ENCODE measurements at regions of chr2 and their contacts with region 1.

Region 1: DNA sequence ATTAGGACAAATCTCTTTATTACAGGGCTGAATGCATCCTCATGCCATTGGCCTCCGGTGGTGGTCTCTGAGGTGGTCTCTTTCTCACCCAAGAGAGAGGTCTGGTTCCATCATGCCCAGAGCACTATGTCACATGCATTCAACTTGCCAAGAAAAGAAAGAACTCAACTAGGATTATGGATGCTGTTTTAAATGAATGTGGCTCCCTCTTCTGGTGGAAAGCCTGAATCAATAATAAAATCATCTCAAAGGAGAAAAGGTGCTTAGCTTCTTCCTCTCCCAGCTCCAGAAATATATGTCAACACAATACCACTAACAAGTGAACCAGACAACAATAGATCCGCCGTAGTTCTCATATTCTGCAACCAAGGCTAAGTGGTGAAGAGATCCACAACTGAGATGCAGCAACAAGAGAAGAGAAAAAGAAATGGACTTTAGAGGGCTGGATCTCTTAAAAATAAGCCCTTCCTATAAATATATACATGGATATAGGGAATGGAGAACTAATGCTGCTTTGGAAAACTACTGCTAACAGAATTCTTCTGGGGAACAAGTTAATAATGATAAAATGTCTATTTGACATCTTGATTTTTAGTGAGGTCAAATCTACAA is 396.8 kb downstream of the NCKAP5 start:
- DNase-seq: peak; percentile 53
- H3K4me3 ChIP-seq: no peak overlapping the region
- H3K27ac ChIP-seq: no peak overlapping the region
- H3K4me1 ChIP-seq: no peaks in the 10 kb centered on the region
- H3K27me3 ChIP-seq: no peaks in the 10 kb centered on the region
- CTCF ChIP-seq: peak; percentile 62 to 65

Region 2: DNA sequence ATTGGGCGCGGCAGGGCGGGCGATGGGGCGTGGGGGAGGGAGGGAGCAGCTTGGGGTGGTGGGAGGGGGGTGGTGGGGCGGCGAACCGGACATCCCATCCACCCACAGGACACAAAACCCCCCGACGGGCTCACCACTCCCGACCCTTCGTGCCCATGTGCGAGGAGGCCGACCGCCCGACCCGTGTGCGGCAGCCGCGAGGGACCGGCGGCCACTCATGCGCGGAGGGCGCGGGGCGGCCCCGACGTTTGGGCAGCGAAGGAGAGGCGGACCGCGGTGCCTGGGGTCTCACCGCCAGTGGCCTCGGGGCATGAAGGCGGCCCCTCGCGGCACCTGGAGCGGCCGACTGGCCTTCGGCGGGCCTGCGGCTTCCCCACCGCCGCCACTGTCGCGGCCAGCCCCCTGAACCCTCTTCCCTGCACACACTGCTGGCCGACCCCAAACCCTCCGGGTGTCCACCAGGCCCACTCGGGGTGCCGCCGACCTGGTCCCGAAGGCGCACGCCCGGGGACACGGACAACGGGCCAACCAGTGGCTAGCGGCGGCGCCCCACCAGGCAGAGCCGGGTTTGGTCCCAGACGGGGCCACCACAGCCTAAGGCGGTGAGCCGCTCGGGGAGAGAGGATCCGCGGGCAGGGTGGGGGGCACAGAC is 915.1 kb before region 1 on chr2:
- CTCF ChIA-PET with region 1: no interaction called
- dilution Hi-C with region 1: no loop called
- in situ Hi-C with region 1: loop called (anchors 10 to 25 kb)
- intact Hi-C with region 1: no loop called
- DNase-seq: no peak
- H3K4me3 ChIP-seq: no peak overlapping the region
- H3K27ac ChIP-seq: no peak overlapping the region
- H3K4me1 ChIP-seq: no peaks in the 10 kb centered on the region
- H3K27me3 ChIP-seq: peaks cover 11% of the 10 kb centered on the region
- CTCF ChIP-seq: no peak

Region 3: DNA sequence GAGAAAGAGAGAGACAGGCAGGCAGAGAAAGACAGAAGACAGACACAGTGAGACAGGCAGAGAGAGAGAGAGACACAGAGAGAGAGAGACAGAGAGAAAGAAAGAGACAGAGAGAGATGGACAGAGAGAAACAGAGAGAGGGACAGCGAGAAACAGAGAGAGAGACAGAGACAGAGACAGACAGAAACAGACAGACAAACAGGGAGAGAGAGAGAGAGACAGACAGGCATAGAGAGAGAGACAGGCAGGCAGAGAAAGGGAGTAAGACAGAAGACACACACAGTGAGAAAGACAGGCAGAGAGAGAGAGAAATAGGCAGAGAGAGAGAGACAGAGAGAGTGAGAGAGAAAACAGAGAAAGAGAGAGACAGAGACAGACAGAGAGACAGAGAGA is 904.4 kb before region 1 on chr2:
- CTCF ChIA-PET with region 1: no interaction called
- dilution Hi-C with region 1: no loop called
- in situ Hi-C with region 1: loop called (anchors 10 to 25 kb)
- intact Hi-C with region 1: loop called (anchors 1 kb)
- DNase-seq: no peak
- H3K4me3 ChIP-seq: no peak overlapping the region
- H3K27ac ChIP-seq: no peak overlapping the region
- H3K4me1 ChIP-seq: peaks cover 4% of the 10 kb centered on the region
- H3K27me3 ChIP-seq: no peaks in the 10 kb centered on the region
- CTCF ChIP-seq: no peak

Region 4: GRCh38 chr2:132651115-132652045 is 520.1 kb before region 1 on chr2:
- CTCF ChIA-PET with region 1: no interaction called
- dilution Hi-C with region 1: no loop called
- in situ Hi-C with region 1: loop called in 1 of 2 experiments (anchors 10 kb)
- intact Hi-C with region 1: loop called (anchors 1 kb)
- DNase-seq: no peak
- H3K4me3 ChIP-seq: no peak overlapping the region
- H3K27ac ChIP-seq: no peak overlapping the region
- H3K4me1 ChIP-seq: no peaks in the 10 kb centered on the region
- H3K27me3 ChIP-seq: no peaks in the 10 kb centered on the region
- CTCF ChIP-seq: no peak

Region 5: GRCh38 chr2:132676999-132677398 is 494.5 kb before region 1 on chr2:
- CTCF ChIA-PET with region 1: no interaction called
- dilution Hi-C with region 1: no loop called
- in situ Hi-C with region 1: no loop called
- intact Hi-C with region 1: loop called (anchors 1 kb)
- DNase-seq: no peak
- H3K4me3 ChIP-seq: no peak overlapping the region
- H3K27ac ChIP-seq: no peak overlapping the region
- H3K4me1 ChIP-seq: no peaks in the 10 kb centered on the region
- H3K27me3 ChIP-seq: no peaks in the 10 kb centered on the region
- CTCF ChIP-seq: peak; percentile 18 to 38

Region 6: DNA sequence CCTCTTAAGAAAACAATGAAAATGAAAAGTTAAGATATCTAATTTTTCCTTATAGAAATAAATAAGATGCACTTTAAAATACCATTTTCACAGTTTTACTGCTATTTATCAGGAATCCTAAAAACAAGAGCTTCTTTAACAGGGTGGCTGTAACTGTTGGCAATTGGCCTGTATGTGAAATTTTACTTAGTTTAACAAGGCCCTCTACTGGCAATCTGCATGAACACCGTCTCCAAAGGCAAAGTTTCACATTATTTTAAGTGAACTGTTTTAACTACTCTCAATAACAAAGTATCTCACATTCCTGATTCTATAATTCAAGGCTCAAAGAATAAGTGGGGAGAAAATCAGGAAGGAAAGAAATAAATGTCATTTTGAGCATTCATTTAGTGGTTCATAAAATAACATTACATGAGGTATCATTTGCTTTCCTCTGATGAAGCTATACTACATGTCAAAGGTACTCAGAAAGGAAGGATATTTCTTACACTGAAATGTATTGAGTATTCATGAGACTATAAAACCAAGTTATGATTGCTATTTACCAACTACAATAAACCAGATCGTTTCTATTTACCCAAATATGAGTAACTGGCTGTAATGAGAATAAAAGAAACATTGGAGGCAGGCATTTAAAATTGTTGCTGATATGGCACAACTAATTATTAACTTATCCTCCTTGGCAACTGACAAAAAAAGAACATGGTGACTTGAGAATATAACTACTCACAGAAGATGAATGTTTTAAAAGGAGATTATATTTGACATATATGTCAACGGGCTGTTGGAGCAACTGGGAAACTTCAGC is 389.8 kb after region 1 on chr2:
- CTCF ChIA-PET with region 1: no interaction called
- dilution Hi-C with region 1: no loop called
- in situ Hi-C with region 1: no loop called
- intact Hi-C with region 1: loop called (anchors 2 kb)
- DNase-seq: peak; percentile 41
- H3K4me3 ChIP-seq: no peak overlapping the region
- H3K27ac ChIP-seq: no peak overlapping the region
- H3K4me1 ChIP-seq: no peaks in the 10 kb centered on the region
- H3K27me3 ChIP-seq: no peaks in the 10 kb centered on the region
- CTCF ChIP-seq: peak; percentile 58 to 70

Region 7: DNA sequence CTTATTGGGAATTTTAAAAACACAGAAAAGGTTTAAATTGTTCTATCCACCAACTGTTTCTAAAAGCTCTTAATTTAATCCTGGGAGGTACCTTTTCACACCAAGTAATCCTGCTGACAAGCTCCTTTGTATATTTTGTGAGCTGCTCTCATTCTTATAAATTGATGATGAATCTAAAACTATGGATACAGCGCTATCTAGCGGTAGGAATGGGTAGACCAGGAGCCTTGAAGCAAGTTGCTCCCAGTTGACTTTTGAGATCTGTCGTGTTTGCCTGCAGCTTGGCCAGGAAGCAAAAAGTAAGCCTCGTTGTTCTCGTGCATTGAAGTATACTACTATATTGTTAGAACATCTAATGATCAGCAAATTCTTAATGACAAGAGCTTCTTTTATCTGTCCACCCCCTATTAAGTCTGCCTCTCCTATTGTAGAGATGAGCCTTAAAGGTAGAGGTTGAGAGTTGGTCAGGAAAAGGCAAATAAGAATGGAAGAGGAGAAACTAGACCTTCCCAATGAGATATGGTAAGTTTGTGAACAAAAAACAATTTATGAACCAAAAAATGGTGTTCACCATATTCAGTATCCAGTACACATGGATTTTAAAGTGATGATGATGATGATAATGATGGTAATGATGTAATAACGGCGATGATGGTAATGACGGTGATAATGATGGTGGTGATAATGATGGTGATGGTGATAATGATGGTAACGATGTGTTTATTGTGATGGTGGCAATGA is 608.8 kb after region 1 on chr2:
- CTCF ChIA-PET with region 1: no interaction called
- dilution Hi-C with region 1: no loop called
- in situ Hi-C with region 1: loop called in 1 of 2 experiments (anchors 25 kb)
- intact Hi-C with region 1: loop called (anchors 5 kb)
- DNase-seq: peak; percentile 70
- H3K4me3 ChIP-seq: no peak overlapping the region
- H3K27ac ChIP-seq: no peak overlapping the region
- H3K4me1 ChIP-seq: no peaks in the 10 kb centered on the region
- H3K27me3 ChIP-seq: no peaks in the 10 kb centered on the region
- CTCF ChIP-seq: peak; percentile 81